ENCODE measurements at regions of chr5 and their contacts with region 1.

Region 1: DNA sequence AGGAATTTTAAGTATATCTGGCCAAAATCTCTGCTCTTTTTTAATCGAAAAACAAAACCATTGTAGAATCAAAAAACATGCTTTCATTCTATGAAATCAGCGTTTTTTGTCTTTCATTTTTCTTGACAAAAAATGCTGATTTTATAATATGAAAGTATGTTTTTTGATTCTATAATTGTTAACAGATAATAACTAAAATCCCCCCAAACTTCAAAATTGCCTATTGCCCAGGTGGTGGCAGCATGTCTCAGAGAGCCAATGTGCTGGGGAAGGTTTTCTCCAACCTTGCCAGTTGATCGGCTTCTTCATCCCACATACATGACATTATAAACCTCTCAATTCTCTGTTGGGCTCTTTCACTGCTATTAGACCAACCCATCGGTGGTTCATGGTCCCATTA is 5.1 kb upstream of the SMIM15 start:
- DNase-seq: no peak
- ATAC-seq: peak; percentile 35; the same call in 1 of the 2 replicates
- H3K4me3 ChIP-seq: no peak overlapping the region
- H3K27ac ChIP-seq: no peak overlapping the region
- H3K4me1 ChIP-seq: peaks cover 0 to 9% of the 10 kb centered on the region in 2 experiments; a peak in 2 of 4 replicates
- H3K27me3 ChIP-seq: no peaks in the 10 kb centered on the region
- CTCF ChIP-seq: peak in 2 of 3 experiments; percentile 43 to 47; a peak in 3 of 6 replicates
- POLR2A ChIP-seq: no peak
- RAD21 ChIP-seq: peak; percentile 68

Region 2: GRCh38 chr5:61658592-61659008 is 491.2 kb after region 1 on chr5:
- CTCF ChIA-PET with region 1: no interaction called
- POLR2A ChIA-PET with region 1: no interaction called
- RAD21 ChIA-PET with region 1: no interaction called
- intact Hi-C with region 1: loop called (anchors 2 kb)
- DNase-seq: peak; percentile 67
- ATAC-seq: peak; percentile 98
- H3K4me3 ChIP-seq: no peak overlapping the region
- H3K27ac ChIP-seq: no peak overlapping the region
- H3K4me1 ChIP-seq: no peaks in the 10 kb centered on the region
- H3K27me3 ChIP-seq: no peaks in the 10 kb centered on the region
- CTCF ChIP-seq: peak; percentile 65 to 97 (median 91); a peak in 5 of 6 replicates
- POLR2A ChIP-seq: no peak
- RAD21 ChIP-seq: peak; percentile 81

Measured in HCT116 (cell line).